ENCODE measurements at regions of chr1 and their contacts with region 1.

Region 1: DNA sequence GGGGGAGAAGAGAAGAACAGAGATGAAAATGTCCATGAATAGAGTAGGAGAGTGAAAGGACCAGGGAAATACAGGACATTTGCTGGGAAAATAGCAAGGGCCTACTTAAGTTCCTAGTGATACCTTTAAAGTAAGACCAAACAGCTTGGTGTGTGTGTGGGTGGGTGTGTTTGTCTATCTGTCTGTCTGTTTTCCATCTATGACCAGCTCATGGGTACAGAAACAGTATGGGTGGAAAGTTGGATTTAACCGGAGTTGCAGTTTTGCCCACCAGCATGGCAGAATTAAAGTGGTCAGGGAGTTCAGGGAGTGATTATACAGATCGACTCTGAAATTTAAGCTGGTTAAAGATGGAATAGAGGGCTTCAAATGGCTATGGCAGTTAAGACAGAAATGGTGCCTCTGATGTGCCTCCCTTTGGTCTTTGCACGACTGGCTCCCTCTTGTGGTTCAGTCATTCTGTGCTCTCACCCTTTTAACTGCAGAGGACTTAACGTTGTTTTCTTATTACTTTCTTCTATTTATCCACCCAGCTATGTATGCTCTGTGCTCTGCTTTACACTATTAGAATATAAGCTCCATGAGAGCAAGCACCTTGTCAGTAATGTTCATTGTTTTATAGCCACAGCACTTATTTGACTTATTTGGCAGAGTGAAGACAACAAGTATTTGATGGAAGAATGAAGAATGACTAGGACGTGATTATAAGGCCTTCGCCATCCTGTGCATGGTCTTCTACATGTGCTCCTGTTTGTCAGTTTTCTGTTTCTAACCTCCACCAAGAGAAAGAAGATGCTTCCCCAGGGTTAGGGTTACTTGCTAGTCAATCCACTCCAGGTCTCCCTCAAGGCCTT is 72.7 kb upstream of the AK4 start:
- DNase-seq: peak; percentile 69
- H3K4me3 Mint-ChIP-seq: no peak overlapping the region
- H3K27ac Mint-ChIP-seq: no peak overlapping the region
- H3K4me1 Mint-ChIP-seq: peaks cover 1% of the 10 kb centered on the region
- H3K27me3 Mint-ChIP-seq: peaks cover 9% of the 10 kb centered on the region

Region 2: GRCh38 chr1:65049941-65050713 is 25.2 kb before region 1 on chr1:
- CTCF ChIA-PET with region 1: interaction called, 12 read pairs
- POLR2A ChIA-PET with region 1: no interaction called
- DNase-seq: no peak
- H3K4me3 Mint-ChIP-seq: no peak overlapping the region
- H3K27ac Mint-ChIP-seq: no peak overlapping the region
- H3K4me1 Mint-ChIP-seq: peaks cover 25% of the 10 kb centered on the region
- H3K27me3 Mint-ChIP-seq: no peaks in the 10 kb centered on the region

Region 3: GRCh38 chr1:65056234-65056633 is 19.1 kb before region 1 on chr1:
- CTCF ChIA-PET with region 1: interaction called, 79 read pairs
- POLR2A ChIA-PET with region 1: no interaction called
- DNase-seq: no peak
- H3K4me3 Mint-ChIP-seq: no peak overlapping the region
- H3K27ac Mint-ChIP-seq: no peak overlapping the region
- H3K4me1 Mint-ChIP-seq: peaks cover 8% of the 10 kb centered on the region
- H3K27me3 Mint-ChIP-seq: no peaks in the 10 kb centered on the region

Region 4: GRCh38 chr1:65108025-65108642 is 32.8 kb after region 1 on chr1:
- CTCF ChIA-PET with region 1: no interaction called
- POLR2A ChIA-PET with region 1: no interaction called
- DNase-seq: no peak
- H3K4me3 Mint-ChIP-seq: no peak overlapping the region
- H3K27ac Mint-ChIP-seq: no peak overlapping the region
- H3K4me1 Mint-ChIP-seq: no peaks in the 10 kb centered on the region
- H3K27me3 Mint-ChIP-seq: peaks cover 21% of the 10 kb centered on the region